BJ (cell line): ENCODE measurements at regions of chr4 and their contacts with region 1.

Region 1: GRCh38 chr4:85747882-85748491 is 273.0 kb downstream of the ARHGAP24 start:
- DNase-seq: no peak
- H3K4me3 ChIP-seq: no peak overlapping the region
- H3K27me3 ChIP-seq: no peaks in the 10 kb centered on the region
- CTCF ChIP-seq: peak; percentile 86

Region 2: GRCh38 chr4:85147439-85148076 is 600.4 kb before region 1 on chr4:
- CTCF ChIA-PET with region 1: interaction called, 11 read pairs
- POLR2A ChIA-PET with region 1: no interaction called
- DNase-seq: no peak
- H3K4me3 ChIP-seq: no peak overlapping the region
- H3K27me3 ChIP-seq: no peaks in the 10 kb centered on the region
- CTCF ChIP-seq: peak; percentile 63

Region 3: GRCh38 chr4:85423431-85423830 is 324.6 kb before region 1 on chr4:
- CTCF ChIA-PET with region 1: interaction called, 10 read pairs
- POLR2A ChIA-PET with region 1: no interaction called
- DNase-seq: no peak
- H3K4me3 ChIP-seq: no peak overlapping the region
- H3K27me3 ChIP-seq: no peaks in the 10 kb centered on the region
- CTCF ChIP-seq: no peak

Region 4: DNA sequence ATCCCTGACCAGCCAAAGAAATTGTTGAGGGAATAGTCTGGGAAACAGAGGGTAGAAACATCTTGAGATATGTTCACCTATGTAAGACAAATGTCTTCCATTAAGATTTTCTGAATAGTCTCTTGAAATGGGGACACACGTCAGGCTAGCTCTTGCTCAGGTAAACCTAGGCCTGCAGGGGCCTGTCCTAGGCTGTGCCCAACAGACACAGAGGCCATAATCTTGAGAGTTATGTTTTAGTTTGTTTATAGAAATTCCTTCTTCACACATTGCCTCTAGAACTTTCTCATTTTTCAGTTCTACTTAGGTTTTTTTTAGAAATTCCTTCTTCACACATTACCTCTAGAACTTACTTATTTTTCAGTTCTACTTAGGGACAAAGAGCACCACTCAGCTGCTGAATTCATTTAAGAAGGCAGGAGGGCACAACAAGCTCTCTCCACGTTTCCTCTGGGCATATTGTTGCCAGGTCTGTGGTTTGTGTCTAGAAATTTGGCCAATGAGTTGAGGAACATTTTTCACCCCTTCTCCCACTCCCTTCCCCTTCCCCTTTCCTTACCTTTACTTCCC is 178.2 kb before region 1 on chr4:
- CTCF ChIA-PET with region 1: no interaction called
- POLR2A ChIA-PET with region 1: no interaction called
- DNase-seq: no peak
- H3K4me3 ChIP-seq: no peak overlapping the region
- H3K27me3 ChIP-seq: no peaks in the 10 kb centered on the region
- CTCF ChIP-seq: no peak

Region 5: DNA sequence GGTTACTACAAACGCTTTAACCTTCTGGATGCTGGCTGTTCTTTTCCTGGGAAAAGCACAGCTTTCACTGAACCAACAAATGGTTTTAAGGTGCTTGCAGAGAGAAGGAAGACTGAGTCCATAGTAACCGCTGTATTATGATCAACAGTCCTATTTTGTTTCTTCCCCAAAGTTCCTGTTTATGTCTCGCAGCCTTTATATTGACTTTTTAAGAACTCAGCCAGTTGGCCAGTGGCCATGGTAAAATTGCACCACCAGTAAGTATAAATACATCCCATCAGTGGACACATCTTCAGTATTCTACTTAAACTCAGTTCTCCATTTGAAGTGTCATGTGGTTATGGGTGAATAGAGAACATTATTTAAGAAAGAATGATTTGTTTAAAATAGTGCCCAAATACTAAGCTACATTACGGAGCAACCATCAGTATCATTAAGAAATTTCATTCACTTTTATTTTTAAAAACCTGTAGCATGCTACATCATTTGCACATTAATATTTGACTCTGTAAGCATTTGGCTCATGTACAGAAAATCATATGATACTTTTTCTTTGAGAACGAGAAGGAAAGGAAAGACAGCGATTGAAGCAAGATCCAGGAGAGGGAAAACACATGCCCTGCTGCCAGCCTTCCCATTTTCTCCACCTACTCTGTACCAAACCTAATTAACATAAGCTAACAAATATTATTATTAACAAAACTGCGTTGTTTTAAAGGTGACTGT is 14.0 kb after region 1 on chr4:
- CTCF ChIA-PET with region 1: interaction called, 17 read pairs
- POLR2A ChIA-PET with region 1: no interaction called
- DNase-seq: no peak
- H3K4me3 ChIP-seq: no peak overlapping the region
- H3K27me3 ChIP-seq: no peaks in the 10 kb centered on the region
- CTCF ChIP-seq: no peak

Region 6: GRCh38 chr4:85778632-85779131 is 30.7 kb after region 1 on chr4:
- CTCF ChIA-PET with region 1: no interaction called
- POLR2A ChIA-PET with region 1: no interaction called
- DNase-seq: no peak
- H3K4me3 ChIP-seq: peak overlapping the region; percentile 45
- H3K27me3 ChIP-seq: no peaks in the 10 kb centered on the region
- CTCF ChIP-seq: no peak

Region 7: DNA sequence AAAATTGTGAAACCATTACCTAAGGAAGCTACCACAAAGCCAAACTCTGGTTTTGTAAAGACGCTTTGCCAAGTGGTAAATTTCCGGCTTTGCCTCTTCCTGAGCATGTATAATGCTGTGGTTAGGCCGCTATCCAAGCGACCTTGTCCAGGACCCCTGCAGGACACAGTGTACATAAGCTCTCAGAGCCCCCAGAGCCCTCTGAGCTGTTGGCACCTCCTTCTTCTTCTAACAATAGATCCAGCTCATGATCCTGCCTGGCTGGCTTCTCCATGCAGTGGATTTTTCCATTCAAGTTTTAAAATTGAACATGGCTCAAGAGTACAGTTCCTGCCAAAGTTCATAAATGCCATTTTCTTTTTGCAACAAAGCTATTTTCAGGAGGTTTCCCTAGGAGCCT is 285.2 kb after region 1 on chr4:
- CTCF ChIA-PET with region 1: interaction called, 3 read pairs
- POLR2A ChIA-PET with region 1: interaction called, 11 read pairs
- DNase-seq: no peak
- H3K4me3 ChIP-seq: no peak overlapping the region
- H3K27me3 ChIP-seq: no peaks in the 10 kb centered on the region; the same call in 1 of the 2 replicates
- CTCF ChIP-seq: no peak